Endothelial cell of umbilical vein (primary cell): ENCODE measurements at regions of chr5 and their contacts with region 1.

Region 1: DNA sequence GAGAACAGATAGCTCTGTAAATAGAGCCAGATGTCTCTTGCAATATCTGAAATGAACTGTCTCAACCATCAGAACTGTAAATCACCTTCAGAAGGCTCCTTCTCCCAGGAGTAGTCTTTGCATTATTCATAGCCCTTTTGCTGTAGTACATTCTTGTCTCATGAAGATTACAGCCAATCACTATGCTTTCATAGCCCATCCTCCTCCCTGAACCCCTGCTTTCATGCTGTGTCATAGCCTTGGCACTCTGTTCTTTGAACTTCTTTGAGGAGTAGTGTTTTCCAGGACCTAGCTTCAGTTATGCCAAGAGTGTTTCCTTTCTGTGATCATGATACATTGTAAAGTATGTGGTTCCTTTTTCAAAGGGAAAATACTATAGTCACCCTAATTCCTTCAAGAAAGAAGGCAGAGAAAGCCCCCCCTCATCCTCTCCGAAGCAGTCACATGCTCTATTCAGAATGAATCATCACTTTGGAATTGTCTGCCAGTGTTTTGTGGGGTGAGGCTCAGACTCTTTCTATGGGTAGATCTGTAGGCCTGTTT is 61.1 kb downstream of the GRIA1 start:
- DNase-seq: peak; percentile 92
- H3K4me3 ChIP-seq: peak overlapping the region in 1 of 3 experiments; percentile 12
- H3K27ac ChIP-seq: peak overlapping the region; percentile 96
- H3K4me1 ChIP-seq: peaks cover 18% of the 10 kb centered on the region
- H3K27me3 ChIP-seq: no peaks in the 10 kb centered on the region
- CTCF ChIP-seq: no peak
- POLR2A ChIP-seq: no peak

Region 2: GRCh38 chr5:153619771-153620170 is 68.2 kb after region 1 on chr5:
- CTCF ChIA-PET with region 1: no interaction called
- POLR2A ChIA-PET with region 1: no interaction called
- dilution Hi-C with region 1: no loop called
- intact Hi-C with region 1: loop called (anchors 1 kb)
- DNase-seq: peak; percentile 86
- H3K4me3 ChIP-seq: no peak overlapping the region
- H3K27ac ChIP-seq: peak overlapping the region; percentile 82
- H3K4me1 ChIP-seq: peaks cover 35% of the 10 kb centered on the region
- H3K27me3 ChIP-seq: no peaks in the 10 kb centered on the region
- CTCF ChIP-seq: no peak
- POLR2A ChIP-seq: no peak

Region 3: DNA sequence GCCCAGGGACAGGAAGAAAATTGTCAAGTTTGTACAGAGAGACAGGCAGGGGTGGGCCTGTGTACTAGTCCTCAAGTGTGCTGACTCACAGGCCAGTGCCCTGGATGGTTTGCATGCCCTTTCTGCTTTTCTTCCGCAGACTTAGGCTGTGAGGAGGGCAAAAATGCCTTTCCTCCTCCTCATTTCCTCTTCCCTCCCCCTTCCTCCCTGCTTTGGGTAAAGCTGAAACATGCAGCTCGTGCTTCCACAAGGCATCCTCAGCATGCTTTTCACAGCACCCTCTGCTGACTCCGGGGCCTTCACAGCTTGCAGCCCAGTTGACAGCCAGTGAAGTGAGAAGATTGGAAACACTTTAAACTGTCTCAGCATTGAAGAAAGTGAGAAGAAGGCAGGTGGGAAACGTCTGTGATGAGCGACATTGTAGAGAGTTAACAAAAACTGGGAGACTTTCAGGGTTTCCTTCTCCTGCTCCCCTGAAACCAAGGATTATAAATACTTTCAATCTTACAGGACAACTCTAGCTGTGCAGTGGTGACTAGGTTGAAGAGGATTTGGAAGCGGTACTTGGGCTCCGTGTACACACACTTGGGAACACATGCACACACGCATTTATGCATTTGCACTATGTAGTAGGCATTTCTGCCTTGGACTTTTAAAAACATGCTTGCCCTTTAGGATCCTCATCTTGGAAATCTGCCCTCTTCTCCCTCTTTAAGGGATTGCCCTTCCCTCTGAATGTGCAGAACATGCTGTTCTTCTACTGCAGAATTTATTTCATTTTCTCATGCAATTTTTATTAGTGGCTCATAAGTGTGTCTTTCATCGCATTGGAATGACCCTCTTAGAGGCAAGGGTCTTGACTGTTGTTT is 77.7 kb after region 1 on chr5:
- CTCF ChIA-PET with region 1: interaction called, 4 read pairs
- POLR2A ChIA-PET with region 1: no interaction called
- dilution Hi-C with region 1: no loop called
- intact Hi-C with region 1: loop called (anchors 1 kb)
- DNase-seq: peak; percentile 92
- H3K4me3 ChIP-seq: no peak overlapping the region
- H3K27ac ChIP-seq: peak overlapping the region; percentile 62
- H3K4me1 ChIP-seq: peaks cover 21% of the 10 kb centered on the region
- H3K27me3 ChIP-seq: no peaks in the 10 kb centered on the region
- CTCF ChIP-seq: peak; percentile 38 to 48
- POLR2A ChIP-seq: no peak

Region 4: GRCh38 chr5:153797484-153797883 is 245.9 kb after region 1 on chr5:
- CTCF ChIA-PET with region 1: no interaction called
- POLR2A ChIA-PET with region 1: no interaction called
- dilution Hi-C with region 1: no loop called
- intact Hi-C with region 1: no loop called
- DNase-seq: no peak
- H3K4me3 ChIP-seq: no peak overlapping the region
- H3K27ac ChIP-seq: no peak overlapping the region
- H3K4me1 ChIP-seq: no peaks in the 10 kb centered on the region
- H3K27me3 ChIP-seq: no peaks in the 10 kb centered on the region
- CTCF ChIP-seq: no peak
- POLR2A ChIP-seq: no peak